Psoas muscle (tissue), 8 donors: ENCODE measurements at regions of chr9 and their contacts with region 1.

Region 1: GRCh38 chr9:7095058-7095457 is 337.3 kb downstream of the KDM4C start:
- DNase-seq: no peak
- ATAC-seq: no peak
- H3K4me3 ChIP-seq: no peak overlapping the region
- H3K27ac ChIP-seq: no peak overlapping the region
- H3K4me1 ChIP-seq: peaks cover 29% of the 10 kb centered on the region
- H3K27me3 ChIP-seq: no peaks in the 10 kb centered on the region
- CTCF ChIP-seq: no peak

Region 2: GRCh38 chr9:6106576-6107339 is 988.3 kb before region 1 on chr9:
- intact Hi-C with region 1: no loop called
- DNase-seq: no peak
- ATAC-seq: peak; percentile 87 to 99 (median 92)
- H3K4me3 ChIP-seq: peak overlapping the region; percentile 46
- H3K27ac ChIP-seq: peak overlapping the region; percentile 73
- H3K4me1 ChIP-seq: peaks cover 10% of the 10 kb centered on the region
- H3K27me3 ChIP-seq: no peaks in the 10 kb centered on the region
- CTCF ChIP-seq: peak; percentile 48

Region 3: GRCh38 chr9:7137040-7137439 is 42.0 kb after region 1 on chr9:
- intact Hi-C with region 1: loop called in 1 of 2 experiments (anchors 5 kb)
- DNase-seq: peak; percentile 60 to 82
- ATAC-seq: peak; percentile 98 to 100 (median 99)
- H3K4me3 ChIP-seq: no peak overlapping the region
- H3K27ac ChIP-seq: peak overlapping the region; percentile 48
- H3K4me1 ChIP-seq: peaks cover 28% of the 10 kb centered on the region
- H3K27me3 ChIP-seq: no peaks in the 10 kb centered on the region
- CTCF ChIP-seq: no peak